Activated B cell treated with CpG ODN at 0.5 μM for 24 hours (primary cell): ENCODE measurements at regions of chr7 and their contacts with region 1.

Region 1: GRCh38 chr7:145812218-145812617 is 304.4 kb upstream of the CNTNAP2 start:
- DNase-seq: no peak
- ATAC-seq: no peak
- H3K4me3 Mint-ChIP-seq: no peak overlapping the region
- H3K27ac Mint-ChIP-seq: no peak overlapping the region
- H3K4me1 Mint-ChIP-seq: peaks cover 2% of the 10 kb centered on the region
- H3K27me3 Mint-ChIP-seq: no peaks in the 10 kb centered on the region
- CTCF ChIP-seq: no peak

Region 2: DNA sequence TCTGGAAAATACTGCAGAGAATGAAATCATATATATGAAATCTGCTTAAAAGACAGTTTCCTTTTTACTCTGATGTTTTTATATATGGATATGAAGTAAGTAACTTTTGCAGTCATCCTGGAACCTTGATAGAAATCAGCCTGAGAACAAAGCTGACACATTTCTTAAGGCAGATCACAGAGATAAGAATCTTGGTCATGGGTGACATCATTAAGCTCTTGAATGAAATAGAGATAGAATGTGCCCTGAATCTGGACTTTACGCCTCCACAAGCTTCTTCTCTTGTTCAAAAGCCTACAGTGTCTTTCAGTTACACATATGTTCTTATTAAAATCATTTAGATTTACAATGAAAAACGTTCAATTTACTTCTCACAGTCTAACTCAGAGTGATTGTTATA is 14.7 kb before region 1 on chr7:
- CTCF ChIA-PET with region 1: no interaction called
- POLR2A ChIA-PET with region 1: no interaction called
- intact Hi-C with region 1: loop called (anchors 1 kb)
- DNase-seq: no peak
- ATAC-seq: no peak
- H3K4me3 Mint-ChIP-seq: no peak overlapping the region
- H3K27ac Mint-ChIP-seq: no peak overlapping the region
- H3K4me1 Mint-ChIP-seq: no peaks in the 10 kb centered on the region
- H3K27me3 Mint-ChIP-seq: no peaks in the 10 kb centered on the region
- CTCF ChIP-seq: no peak